ENCODE measurements at regions of chr1 and their contacts with region 1.

Region 1: DNA sequence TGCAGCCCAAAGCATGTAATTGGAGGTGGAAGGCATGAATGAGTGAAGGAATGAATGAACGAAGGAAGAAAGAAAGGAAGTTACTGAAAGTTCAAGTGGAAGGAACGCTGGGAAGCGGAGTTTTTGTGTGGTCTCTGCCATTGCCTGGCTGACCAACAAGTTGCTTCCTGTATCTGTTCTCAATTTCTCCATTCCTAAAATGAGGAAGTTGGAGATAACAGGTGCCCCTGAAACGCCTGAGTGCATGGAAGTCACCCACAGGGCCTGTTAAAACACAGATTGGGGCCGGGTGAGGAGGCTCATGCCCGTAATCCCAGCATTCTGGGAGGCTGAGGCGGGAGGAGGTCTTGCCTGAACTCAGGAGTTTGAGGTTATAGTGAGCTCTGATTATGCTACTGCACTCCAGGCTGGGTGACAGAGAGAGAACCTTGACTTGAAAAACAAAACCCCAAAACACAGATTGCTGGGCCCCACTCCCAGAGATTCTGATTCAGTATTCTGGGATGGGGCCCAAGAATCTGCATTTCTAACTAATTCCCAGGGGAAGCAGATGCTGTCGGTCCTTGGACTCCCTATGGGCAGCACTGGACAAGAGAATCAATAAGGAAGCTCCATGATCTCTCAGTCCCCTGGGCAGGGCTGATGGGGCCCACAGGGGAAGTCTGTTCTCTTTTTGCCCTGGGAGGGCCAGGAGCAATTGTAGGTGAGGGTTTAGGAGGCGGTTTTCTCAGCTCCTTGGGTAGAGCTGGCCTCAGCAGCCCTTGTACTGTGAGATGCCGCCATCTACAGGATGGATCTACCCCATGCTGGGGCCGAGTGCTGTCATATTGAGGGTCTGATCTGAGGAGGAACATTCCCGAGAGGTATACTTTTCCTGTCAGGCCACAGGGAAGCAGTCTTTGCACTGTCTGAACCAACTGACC is 3.3 kb upstream of the CNR2 start:
- DNase-seq: peak; percentile 93
- H3K4me3 ChIP-seq: peak overlapping the region; percentile 29
- H3K27ac ChIP-seq: peak overlapping the region; percentile 71
- H3K4me1 ChIP-seq: peaks cover 76% of the 10 kb centered on the region
- CTCF ChIP-seq: peak; percentile 97

Region 2: GRCh38 chr1:23772049-23772853 is 144.2 kb before region 1 on chr1:
- CTCF ChIA-PET with region 1: interaction called, 5 read pairs
- POLR2A ChIA-PET with region 1: interaction called, 3 read pairs
- intact Hi-C with region 1: loop called (anchors 1 kb)
- DNase-seq: peak; percentile 87
- H3K4me3 ChIP-seq: no peak overlapping the region
- H3K27ac ChIP-seq: no peak overlapping the region
- H3K4me1 ChIP-seq: peaks cover 22% of the 10 kb centered on the region
- CTCF ChIP-seq: peak; percentile 98

Region 3: DNA sequence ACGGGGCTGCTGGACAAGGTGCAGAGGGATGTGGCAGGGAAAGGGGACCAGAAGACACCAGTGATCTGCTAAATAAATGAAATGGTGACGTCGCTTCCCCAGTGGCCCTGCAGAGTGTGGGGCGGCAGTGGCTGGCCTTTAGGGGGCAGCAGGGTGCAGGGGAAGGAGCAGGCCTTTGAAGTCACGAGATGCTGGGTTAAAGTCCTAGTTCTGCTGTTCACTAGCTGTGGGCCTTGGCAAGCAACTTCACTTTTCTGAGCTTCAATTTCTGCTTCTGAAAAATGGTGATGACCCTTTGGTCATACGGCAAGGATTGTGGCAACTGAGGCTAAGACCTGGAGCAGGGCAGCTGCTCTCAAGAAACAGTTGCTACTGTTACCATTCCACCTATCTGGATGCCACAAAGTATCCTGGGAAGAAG is 106.7 kb before region 1 on chr1:
- CTCF ChIA-PET with region 1: interaction called, 20 read pairs
- POLR2A ChIA-PET with region 1: interaction called, 4 read pairs
- intact Hi-C with region 1: loop called (anchors 1 kb)
- DNase-seq: peak; percentile 86
- H3K4me3 ChIP-seq: no peak overlapping the region
- H3K27ac ChIP-seq: peak overlapping the region; percentile 25
- H3K4me1 ChIP-seq: peaks cover 41% of the 10 kb centered on the region
- CTCF ChIP-seq: peak; percentile 89

Region 4: DNA sequence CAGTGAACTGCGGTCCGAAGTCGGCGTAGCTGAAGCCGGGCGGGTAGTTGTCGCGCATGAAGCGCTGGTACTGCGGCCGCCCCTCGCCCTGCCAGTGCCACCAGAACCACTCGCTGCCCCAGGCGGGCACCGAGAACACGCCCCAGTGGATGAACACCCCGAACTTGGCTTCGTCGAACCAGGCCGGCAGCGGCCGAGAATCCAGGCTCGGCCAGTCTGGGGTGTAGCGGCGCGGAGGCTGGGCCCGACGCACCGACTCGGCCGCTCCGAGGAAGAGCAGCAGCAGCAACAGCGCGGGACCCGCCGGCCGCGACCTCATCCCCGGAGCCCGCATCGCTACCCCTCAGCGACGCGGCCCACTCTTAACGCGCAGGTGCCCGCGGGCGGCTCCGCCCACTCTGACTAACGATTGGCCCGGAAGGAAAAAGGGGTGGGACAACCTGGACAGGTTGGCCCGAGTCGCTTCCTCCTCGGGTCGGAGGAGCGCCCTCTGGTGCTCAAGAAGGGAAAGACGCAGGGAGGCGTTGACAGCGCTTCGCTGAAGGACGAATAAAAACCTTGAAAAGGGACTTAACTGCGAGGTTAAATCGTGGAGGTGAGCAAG is 48.4 kb before region 1 on chr1 and contains the start of gene FUCA1:
- CTCF ChIA-PET with region 1: no interaction called
- POLR2A ChIA-PET with region 1: no interaction called
- intact Hi-C with region 1: loop called (anchors 1 kb)
- DNase-seq: peak; percentile 97
- H3K4me3 ChIP-seq: peak within 1 kb of the TSS; percentile 74
- H3K27ac ChIP-seq: peak within 1 kb of the TSS; percentile 21
- H3K4me1 ChIP-seq: peaks cover 25% of the 10 kb centered on the region
- CTCF ChIP-seq: peak; percentile 82
- total RNA-seq, gene FUCA1: 9.1 and 9.3 TPM in 2 replicates

Region 5: GRCh38 chr1:23930861-23931490 is 14.5 kb after region 1 on chr1:
- CTCF ChIA-PET with region 1: interaction called, 14 read pairs
- POLR2A ChIA-PET with region 1: interaction called, 11 read pairs
- intact Hi-C with region 1: no loop called
- DNase-seq: peak; percentile 88
- H3K4me3 ChIP-seq: peak overlapping the region; percentile 62
- H3K27ac ChIP-seq: peak overlapping the region; percentile 93
- H3K4me1 ChIP-seq: peaks cover 75% of the 10 kb centered on the region
- CTCF ChIP-seq: no peak

Region 6: DNA sequence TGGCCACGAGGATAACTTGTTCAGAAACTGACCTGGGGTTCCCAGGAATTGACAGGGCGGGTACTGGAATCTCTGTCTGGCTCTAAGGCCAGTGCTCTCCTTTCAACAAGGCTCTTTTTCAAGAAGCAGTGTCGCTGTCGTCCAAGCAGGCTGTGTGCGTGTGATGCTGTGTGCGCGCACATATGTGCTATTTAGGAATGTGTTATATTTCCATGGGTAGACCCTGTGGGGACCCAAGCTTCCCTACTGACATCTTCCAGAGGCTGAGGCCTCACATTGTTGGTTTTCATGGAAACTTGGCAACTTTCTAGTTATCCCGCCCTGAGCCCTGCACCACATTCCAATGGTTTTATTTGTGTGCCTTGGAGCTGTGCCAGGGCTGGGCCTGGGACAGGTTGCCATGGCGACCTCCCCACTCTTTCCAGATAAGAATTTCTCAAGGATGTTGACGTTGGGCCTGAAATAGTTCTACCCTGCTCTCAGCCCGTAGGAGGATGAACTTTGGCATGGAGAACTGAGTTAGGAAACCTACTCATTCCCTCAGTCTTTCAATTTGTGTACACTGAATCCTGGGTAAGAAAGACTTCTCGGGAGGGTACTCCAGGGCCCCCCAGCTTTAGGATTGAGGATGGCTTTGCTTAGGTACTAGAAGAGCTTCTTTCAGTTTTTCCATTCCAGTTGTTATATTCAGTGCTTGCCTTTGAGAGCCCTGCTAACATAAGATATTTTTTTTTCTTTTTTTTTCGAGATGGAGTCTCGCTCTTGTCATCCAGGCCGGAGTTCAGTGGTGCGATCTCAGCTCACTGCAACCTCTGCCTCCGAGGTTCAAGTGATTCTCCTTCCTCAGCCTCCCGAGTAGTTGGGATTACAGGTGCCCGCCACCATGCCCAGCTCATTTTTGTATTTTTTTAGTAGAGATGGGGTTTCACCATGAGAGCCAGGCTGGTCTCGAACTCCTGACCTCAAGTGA is 102.4 kb after region 1 on chr1:
- CTCF ChIA-PET with region 1: no interaction called
- POLR2A ChIA-PET with region 1: no interaction called
- intact Hi-C with region 1: no loop called
- DNase-seq: no peak
- H3K4me3 ChIP-seq: no peak overlapping the region
- H3K27ac ChIP-seq: no peak overlapping the region
- H3K4me1 ChIP-seq: peaks cover 9% of the 10 kb centered on the region
- CTCF ChIP-seq: no peak

Measured in OCI-LY7 (cell line).